ENCODE measurements at regions of chr11 and their contacts with region 1.

Region 1: GRCh38 chr11:62753736-62754603 is at the start of gene ZBTB3:
- DNase-seq: peak; percentile 99
- H3K4me3 Mint-ChIP-seq: peak within 1 kb of the TSS; percentile 92
- H3K27ac Mint-ChIP-seq: peak within 1 kb of the TSS; percentile 95
- H3K4me1 Mint-ChIP-seq: peaks cover 27% of the 10 kb centered on the region
- H3K27me3 Mint-ChIP-seq: no peaks in the 10 kb centered on the region
- total RNA-seq, gene ZBTB3: 14.3 to 18.5 TPM

Region 2: DNA sequence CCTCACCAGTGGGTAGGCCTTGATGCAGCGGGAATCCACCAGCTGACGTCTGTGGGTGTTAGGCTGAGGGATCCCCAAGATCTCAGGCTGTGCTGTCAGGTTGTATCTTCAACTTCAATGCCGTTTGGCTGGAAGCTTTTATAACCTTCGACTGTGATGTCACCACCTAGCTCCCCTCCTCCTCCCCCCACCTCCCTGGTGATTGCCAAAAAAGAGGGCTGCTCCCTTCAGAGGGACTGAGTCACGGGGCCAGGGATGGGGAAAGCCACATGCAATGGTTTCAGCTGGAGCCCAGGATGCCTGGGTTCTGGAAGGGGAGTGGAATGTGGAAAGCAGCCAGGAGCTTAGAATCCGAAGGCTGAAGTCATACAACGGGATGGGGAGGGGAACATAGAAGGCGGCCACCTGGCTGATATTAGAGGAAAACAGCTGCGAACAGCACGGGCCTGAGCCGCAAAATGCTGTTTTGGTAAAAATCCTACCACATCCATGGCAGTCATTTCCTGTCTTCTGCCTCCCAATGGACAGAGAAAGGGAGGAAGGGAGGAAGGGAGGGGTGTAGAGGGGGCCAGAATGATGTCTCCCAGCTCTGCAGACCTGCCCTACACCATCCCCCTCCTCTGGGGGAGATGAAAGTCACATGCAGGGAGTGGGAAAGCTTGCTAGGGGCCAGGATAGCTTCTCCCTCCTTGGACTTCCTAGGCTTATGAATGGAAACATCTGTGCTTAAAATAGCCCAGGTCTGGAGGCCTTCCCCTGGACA is 64.4 kb before region 1 on chr11 and contains the start of gene LRRN4CL:
- CTCF ChIA-PET with region 1: no interaction called
- POLR2A ChIA-PET with region 1: no interaction called
- DNase-seq: no peak
- H3K4me3 Mint-ChIP-seq: no peak within 1 kb of the TSS
- H3K27ac Mint-ChIP-seq: no peak within 1 kb of the TSS
- H3K4me1 Mint-ChIP-seq: peaks cover under 1% of the 10 kb centered on the region
- H3K27me3 Mint-ChIP-seq: peaks cover 10% of the 10 kb centered on the region
- total RNA-seq, gene LRRN4CL: 0.17 to 0.40 TPM

Region 3: DNA sequence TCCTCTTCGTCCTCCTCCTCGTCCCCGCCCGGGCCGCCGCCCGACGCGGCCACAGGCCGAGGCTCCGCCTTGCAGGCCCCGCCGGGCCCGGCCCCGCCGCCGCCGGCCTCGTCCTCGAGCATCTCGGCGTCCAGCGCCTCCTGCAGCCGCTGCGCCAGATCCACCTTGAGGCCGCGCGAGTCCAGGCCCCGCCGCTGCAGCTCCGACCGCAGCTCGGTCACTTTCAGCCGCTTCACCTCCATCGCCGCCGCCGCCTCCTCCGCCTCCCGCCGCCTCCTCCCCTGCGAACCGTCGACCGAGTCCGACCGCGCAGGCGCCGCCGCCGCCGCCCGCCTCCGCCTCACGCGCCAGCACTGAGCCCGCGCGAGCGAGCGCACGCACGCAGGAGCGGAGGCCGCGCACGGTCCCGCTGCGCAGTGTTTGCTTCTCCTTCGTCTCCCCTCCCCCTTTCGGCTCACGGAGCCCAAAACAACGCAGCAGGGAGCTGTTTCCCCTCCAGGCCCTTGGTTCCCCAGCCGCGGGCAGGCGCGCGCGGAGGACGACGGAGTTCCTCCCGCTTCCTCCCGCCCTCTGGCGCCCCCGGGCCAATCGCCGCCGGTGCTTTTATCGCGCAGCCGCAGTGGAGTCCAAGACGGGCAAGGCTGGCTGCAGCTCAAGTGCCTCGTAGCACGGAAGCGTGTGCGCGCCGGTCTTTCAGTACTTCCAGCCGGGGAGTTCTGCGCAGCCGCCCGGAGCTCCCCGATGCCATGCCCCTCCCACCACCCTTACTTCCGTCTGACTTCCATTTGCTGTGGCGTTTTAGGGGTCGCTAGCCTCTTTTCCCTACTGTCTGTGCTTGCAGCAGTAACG is 26.8 kb before region 1 on chr11 and contains the start of gene HNRNPUL2:
- CTCF ChIA-PET with region 1: interaction called, 13 read pairs
- POLR2A ChIA-PET with region 1: interaction called, 9 read pairs
- DNase-seq: peak; percentile 98
- H3K4me3 Mint-ChIP-seq: peak within 1 kb of the TSS; percentile 96
- H3K27ac Mint-ChIP-seq: peak within 1 kb of the TSS; percentile 98
- H3K4me1 Mint-ChIP-seq: peaks cover 54% of the 10 kb centered on the region
- H3K27me3 Mint-ChIP-seq: no peaks in the 10 kb centered on the region
- total RNA-seq, gene HNRNPUL2: 67.9 to 69.0 TPM

Region 4: DNA sequence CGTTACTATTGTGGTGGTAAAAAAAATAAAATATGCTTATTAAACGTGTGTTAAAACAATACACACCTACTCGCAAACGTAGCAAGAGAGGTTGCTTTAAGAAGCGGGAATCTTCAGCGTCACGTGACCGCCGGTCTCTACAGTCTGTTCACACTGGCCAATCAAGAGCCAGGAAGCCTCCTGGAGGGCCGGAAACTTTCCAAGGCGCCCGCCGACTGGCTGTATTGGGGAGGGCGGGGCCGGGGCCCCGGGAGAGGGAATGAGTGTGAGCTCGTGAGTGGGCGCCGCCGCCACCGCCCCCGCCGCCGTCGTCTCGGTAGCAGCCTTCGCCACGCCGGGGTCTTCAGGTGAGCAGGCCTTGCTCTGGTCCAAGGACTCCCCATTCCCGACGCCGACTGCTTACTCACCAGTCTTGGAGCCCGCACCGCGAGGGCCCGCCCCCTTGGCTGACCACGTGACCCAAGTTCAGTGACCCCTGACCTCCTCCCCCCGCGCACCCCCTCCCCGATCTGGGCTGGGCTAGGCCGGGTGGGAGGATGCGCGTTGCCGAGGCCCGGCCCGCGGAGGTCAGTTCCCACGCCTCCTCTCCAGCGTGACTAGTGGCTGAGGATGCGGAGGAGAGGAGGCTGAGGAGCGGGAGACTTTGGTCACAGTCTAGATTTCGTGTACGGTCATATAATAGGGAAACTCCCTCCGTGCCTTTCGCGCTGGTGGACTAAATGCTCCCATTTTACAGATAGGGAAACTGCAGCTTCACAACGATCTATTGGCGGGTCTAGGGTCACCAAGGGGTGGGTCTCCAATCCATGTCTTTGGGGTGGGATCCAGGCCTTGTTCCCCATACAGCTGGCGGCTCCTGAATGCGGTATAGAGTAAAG is 17.4 kb after region 1 on chr11 and contains the start of gene TAF6L:
- CTCF ChIA-PET with region 1: interaction called, 14 read pairs
- POLR2A ChIA-PET with region 1: interaction called, 4 read pairs
- DNase-seq: peak; percentile 95
- H3K4me3 Mint-ChIP-seq: peak within 1 kb of the TSS; percentile 79
- H3K27ac Mint-ChIP-seq: peak within 1 kb of the TSS; percentile 93
- H3K4me1 Mint-ChIP-seq: peaks cover 26% of the 10 kb centered on the region
- H3K27me3 Mint-ChIP-seq: no peaks in the 10 kb centered on the region
- total RNA-seq, gene TAF6L: 17.7 to 19.4 TPM

Region 5: GRCh38 chr11:62794201-62794775 is 40.3 kb after region 1 on chr11:
- CTCF ChIA-PET with region 1: no interaction called
- POLR2A ChIA-PET with region 1: no interaction called
- DNase-seq: no peak
- H3K4me3 Mint-ChIP-seq: no peak overlapping the region
- H3K27ac Mint-ChIP-seq: peak overlapping the region; percentile 46
- H3K4me1 Mint-ChIP-seq: peaks cover 34% of the 10 kb centered on the region
- H3K27me3 Mint-ChIP-seq: no peaks in the 10 kb centered on the region